ENCODE measurements at regions of chr7 and their contacts with region 1.

Region 1: DNA sequence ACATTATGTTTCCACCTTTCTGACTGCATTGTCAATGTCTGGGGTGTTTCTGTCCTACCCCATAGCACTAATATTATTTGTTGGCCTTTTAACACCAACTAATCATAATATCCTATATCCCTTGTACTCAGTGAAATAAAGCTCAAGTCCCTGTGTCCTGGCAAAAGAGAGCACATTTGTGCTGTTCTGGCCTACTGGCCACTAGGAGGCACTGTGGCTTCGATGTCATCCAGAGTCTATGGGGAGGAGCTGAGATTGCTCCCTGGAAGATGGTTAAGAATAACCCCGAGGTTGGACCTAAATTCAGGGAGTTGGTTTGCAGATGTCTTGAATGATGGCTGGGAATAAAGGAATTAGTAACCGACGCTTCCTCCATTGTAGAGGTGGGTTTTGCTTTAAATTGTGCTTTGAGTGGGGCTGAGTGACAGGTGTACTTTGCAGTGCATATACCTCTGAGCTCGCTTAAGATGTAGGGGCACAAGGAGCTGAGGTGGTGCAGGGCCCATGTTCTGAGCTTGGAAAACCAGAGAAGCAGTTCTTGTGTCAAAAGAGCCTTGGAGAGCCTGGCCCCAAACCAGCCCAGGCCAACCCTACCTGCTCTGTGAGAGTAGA is 191.2 kb upstream of the PRSS1 start:
- DNase-seq: peak; percentile 23 to 82
- H3K4me3 ChIP-seq: no peak overlapping the region
- H3K27ac ChIP-seq: no peak overlapping the region
- H3K4me1 ChIP-seq: no peaks in the 10 kb centered on the region
- H3K27me3 ChIP-seq: no peaks in the 10 kb centered on the region; a peak in 1 of 7 replicates
- CTCF ChIP-seq: peak; percentile 79 to 95 (median 84)
- EP300 ChIP-seq: no peak
- POLR2A ChIP-seq: no peak
- RAD21 ChIP-seq: peak; percentile 45 to 65; a peak in 3 of 4 replicates

Region 2: DNA sequence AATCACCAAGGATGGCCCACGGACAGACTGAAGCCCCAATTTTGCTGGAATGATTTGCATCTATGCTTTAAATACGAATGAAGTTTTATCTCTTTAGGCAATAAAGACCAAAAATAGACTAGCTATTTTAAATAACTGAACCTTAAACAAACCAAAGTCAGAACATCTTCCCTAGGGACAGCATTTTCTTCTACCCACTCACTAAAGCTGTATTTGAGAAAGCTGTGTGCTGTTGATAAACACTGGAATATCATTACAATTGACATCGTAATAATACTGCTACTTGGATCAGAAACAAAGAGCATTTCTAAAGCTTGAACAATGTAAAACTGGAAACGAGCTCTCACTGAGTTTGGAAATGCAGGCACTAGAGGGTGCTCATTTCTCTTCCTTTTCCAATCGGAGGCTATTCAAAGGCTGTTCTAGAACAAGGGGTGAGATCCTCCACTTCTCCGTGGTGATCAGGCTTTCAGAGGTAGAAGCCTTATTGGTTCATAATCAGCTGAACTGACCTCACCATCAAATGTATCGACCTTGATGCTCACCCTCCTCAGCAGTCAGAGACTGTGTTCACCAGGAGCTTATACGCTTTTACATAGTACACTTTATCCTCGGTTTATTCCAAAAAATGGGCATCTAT is 34.1 kb before region 1 on chr7:
- CTCF ChIA-PET with region 1: interaction called, 12 read pairs
- POLR2A ChIA-PET with region 1: no interaction called
- DNase-seq: no peak
- H3K4me3 ChIP-seq: no peak overlapping the region
- H3K27ac ChIP-seq: no peak overlapping the region
- H3K4me1 ChIP-seq: no peaks in the 10 kb centered on the region
- H3K27me3 ChIP-seq: 0 out of 7 replicates have a peak, but pooled peaks cover 0 to 2% (median 0%) of the 10 kb centered on the region in 4 experiments
- CTCF ChIP-seq: peak in 1 of 3 experiments; percentile 18; a peak in 1 of 4 replicates
- EP300 ChIP-seq: no peak
- POLR2A ChIP-seq: no peak
- RAD21 ChIP-seq: no peak

Region 3: GRCh38 chr7:142542942-142543341 is 15.1 kb before region 1 on chr7:
- CTCF ChIA-PET with region 1: interaction called, 43 read pairs
- POLR2A ChIA-PET with region 1: interaction called, 3 read pairs
- DNase-seq: no peak
- H3K4me3 ChIP-seq: no peak overlapping the region
- H3K27ac ChIP-seq: no peak overlapping the region
- H3K4me1 ChIP-seq: no peaks in the 10 kb centered on the region
- H3K27me3 ChIP-seq: no peaks in the 10 kb centered on the region
- CTCF ChIP-seq: no peak
- EP300 ChIP-seq: no peak
- POLR2A ChIP-seq: no peak
- RAD21 ChIP-seq: no peak

Region 4: DNA sequence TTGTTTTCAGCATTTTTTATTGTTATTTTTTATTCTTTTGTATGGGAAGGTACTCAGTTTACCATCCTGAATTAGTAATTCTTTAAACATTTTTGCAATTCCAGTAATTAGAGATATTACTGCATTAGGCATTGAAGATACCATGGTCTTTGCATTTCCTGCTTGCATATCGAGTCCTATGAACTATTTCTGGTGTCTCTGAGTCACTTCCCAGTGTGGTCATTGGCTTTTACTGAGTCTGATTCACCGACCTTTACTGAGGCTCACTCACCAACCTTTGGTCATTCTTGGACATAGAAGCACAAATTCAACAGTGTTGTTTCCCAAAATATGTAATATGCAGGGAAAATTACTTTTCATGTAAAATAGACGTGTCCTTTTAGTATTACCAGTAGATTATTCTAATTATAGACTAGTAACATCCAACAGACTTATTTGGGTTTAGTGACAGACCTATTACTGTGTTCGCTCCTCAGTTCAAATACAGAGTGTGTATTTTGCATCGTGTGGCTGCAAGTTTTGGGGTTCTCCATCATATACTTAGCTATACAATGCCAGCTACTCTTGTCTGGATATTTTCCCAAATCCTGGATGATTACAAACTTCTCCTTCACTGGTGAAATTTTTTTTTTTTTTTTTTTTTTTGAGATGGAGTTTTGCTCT is 10.5 kb after region 1 on chr7:
- CTCF ChIA-PET with region 1: interaction called, 42 read pairs
- POLR2A ChIA-PET with region 1: interaction called, 4 read pairs
- DNase-seq: no peak
- H3K4me3 ChIP-seq: no peak overlapping the region
- H3K27ac ChIP-seq: no peak overlapping the region
- H3K4me1 ChIP-seq: peaks cover 0 to 5% (median 0%) of the 10 kb centered on the region in 4 experiments; a peak in 2 of 7 replicates
- H3K27me3 ChIP-seq: no peaks in the 10 kb centered on the region
- CTCF ChIP-seq: no peak
- EP300 ChIP-seq: no peak
- POLR2A ChIP-seq: no peak
- RAD21 ChIP-seq: no peak

Region 5: GRCh38 chr7:142638578-142638977 is 80.5 kb after region 1 on chr7:
- CTCF ChIA-PET with region 1: no interaction called
- POLR2A ChIA-PET with region 1: no interaction called
- DNase-seq: no peak
- H3K4me3 ChIP-seq: no peak overlapping the region
- H3K27ac ChIP-seq: no peak overlapping the region
- H3K4me1 ChIP-seq: no peaks in the 10 kb centered on the region
- H3K27me3 ChIP-seq: no peaks in the 10 kb centered on the region
- CTCF ChIP-seq: no peak
- EP300 ChIP-seq: no peak
- POLR2A ChIP-seq: no peak
- RAD21 ChIP-seq: no peak